Ovary (tissue), 10 donors: ENCODE measurements at regions of chr5 and their contacts with region 1.

Region 1: DNA sequence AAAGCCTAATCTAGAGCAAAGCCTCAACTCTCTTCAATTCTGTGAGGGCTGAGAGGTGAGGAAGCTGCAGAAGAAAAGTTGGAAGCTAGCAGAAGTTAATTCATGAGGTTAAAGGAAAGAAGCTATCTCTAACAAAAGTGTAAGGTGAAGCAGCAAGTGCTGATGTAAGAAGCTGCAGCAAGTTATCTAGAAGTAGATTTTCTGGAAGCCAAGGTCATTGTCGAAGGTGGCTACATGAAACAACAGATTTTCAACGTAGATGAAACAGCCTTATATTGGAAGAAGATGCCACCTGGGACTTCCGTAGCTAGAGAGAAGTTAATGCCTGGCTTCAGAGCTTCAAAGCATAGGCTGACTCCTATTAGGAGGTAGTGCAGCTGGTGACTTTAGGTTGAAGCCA is 42.0 kb downstream of the SREK1 start:
- DNase-seq: no peak
- H3K4me3 ChIP-seq: no peak overlapping the region
- H3K27ac ChIP-seq: no peak overlapping the region
- H3K4me1 ChIP-seq: peaks cover 4% of the 10 kb centered on the region
- H3K27me3 ChIP-seq: no peaks in the 10 kb centered on the region
- CTCF ChIP-seq: no peak
- EP300 ChIP-seq: no peak
- POLR2A ChIP-seq: no peak

Region 2: GRCh38 chr5:65742565-65743231 is 443.4 kb before region 1 on chr5:
- intact Hi-C with region 1: no loop called
- DNase-seq: no peak
- H3K4me3 ChIP-seq: no peak overlapping the region
- H3K27ac ChIP-seq: no peak overlapping the region
- H3K4me1 ChIP-seq: no peaks in the 10 kb centered on the region
- H3K27me3 ChIP-seq: no peaks in the 10 kb centered on the region
- CTCF ChIP-seq: peak in 2 of 3 donors; percentile 28 to 51
- EP300 ChIP-seq: no peak
- POLR2A ChIP-seq: no peak

Region 3: DNA sequence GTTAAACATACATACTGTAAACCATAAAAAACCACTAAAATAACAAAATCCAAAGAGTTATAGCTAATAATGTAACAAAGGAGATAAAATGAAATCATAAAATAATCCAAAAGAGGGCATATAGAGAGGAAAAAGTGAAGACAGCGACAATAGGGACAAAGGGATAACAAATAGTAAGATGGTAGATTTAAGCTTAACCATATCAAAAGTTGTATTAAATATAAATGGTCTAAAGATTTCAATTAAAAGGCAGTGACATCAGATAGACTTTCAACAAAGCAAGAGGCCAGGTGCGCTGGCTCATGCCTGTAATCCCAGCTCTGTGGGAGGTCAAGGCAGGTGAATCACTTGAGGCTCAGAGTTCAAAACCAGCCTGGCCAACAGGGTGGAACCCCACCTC is 96.7 kb before region 1 on chr5:
- intact Hi-C with region 1: no loop called
- DNase-seq: no peak
- H3K4me3 ChIP-seq: no peak overlapping the region
- H3K27ac ChIP-seq: no peak overlapping the region
- H3K4me1 ChIP-seq: no peaks in the 10 kb centered on the region
- H3K27me3 ChIP-seq: no peaks in the 10 kb centered on the region
- CTCF ChIP-seq: no peak
- EP300 ChIP-seq: no peak
- POLR2A ChIP-seq: no peak

Region 4: DNA sequence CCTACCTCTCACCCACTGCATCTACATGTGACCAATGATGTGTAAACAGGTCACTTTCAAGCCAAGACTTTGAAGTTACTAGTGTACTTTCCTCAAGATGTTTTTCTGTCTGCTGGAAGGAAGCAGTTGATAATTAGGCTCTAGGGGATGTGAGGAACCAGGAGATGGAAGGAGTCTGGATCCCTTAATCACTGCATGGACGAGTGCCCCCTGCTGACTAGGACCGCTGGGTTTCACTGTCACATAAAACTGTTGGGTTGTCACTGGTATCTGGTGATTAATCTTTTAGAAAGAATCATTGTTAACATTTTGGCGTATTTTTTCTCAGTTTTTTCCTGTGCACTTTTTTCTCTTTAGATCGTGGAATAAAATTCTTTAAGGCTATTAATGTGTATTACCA is 37.5 kb after region 1 on chr5:
- intact Hi-C with region 1: loop called in 1 of 4 experiments (anchors 5 kb)
- DNase-seq: no peak
- H3K4me3 ChIP-seq: no peak overlapping the region
- H3K27ac ChIP-seq: no peak overlapping the region
- H3K4me1 ChIP-seq: no peaks in the 10 kb centered on the region
- H3K27me3 ChIP-seq: no peaks in the 10 kb centered on the region
- CTCF ChIP-seq: no peak
- EP300 ChIP-seq: no peak
- POLR2A ChIP-seq: no peak

Region 5: GRCh38 chr5:66234241-66234640 is 48.1 kb after region 1 on chr5:
- intact Hi-C with region 1: no loop called
- DNase-seq: no peak
- H3K4me3 ChIP-seq: no peak overlapping the region
- H3K27ac ChIP-seq: no peak overlapping the region
- H3K4me1 ChIP-seq: no peaks in the 10 kb centered on the region
- H3K27me3 ChIP-seq: no peaks in the 10 kb centered on the region
- CTCF ChIP-seq: no peak
- EP300 ChIP-seq: no peak
- POLR2A ChIP-seq: no peak